ENCODE measurements at regions of chr4 and their contacts with region 1.

Region 1: GRCh38 chr4:99120501-99120900 is 23.6 kb downstream of the ADH4 start:
- DNase-seq: no peak
- ATAC-seq: no peak
- H3K4me3 ChIP-seq: no peak overlapping the region
- H3K27ac ChIP-seq: no peak overlapping the region
- H3K4me1 ChIP-seq: peaks cover 0 to 9% (median 0%) of the 10 kb centered on the region in 3 donors
- H3K27me3 ChIP-seq: no peaks in the 10 kb centered on the region
- CTCF ChIP-seq: no peak

Region 2: GRCh38 chr4:99404595-99405287 is 284.2 kb after region 1 on chr4:
- intact Hi-C with region 1: loop called in 1 of 3 experiments (anchors 5 kb)
- DNase-seq: no peak
- ATAC-seq: peak in 3 of 4 donors; percentile 8 to 72 (median 20)
- H3K4me3 ChIP-seq: no peak overlapping the region
- H3K27ac ChIP-seq: peak overlapping the region in 2 of 4 donors; percentile 24 to 48
- H3K4me1 ChIP-seq: peaks cover 37 to 39% (median 37%) of the 10 kb centered on the region in 3 donors
- H3K27me3 ChIP-seq: no peaks in the 10 kb centered on the region
- CTCF ChIP-seq: no peak